Activated CD4-positive, alpha-beta memory T cell treated with anti-CD3 and anti-CD28 coated beads, Interleukin-2, amount 10 ng/mL, durations not matched to agents 7 days and 5 days (primary cell): ENCODE measurements at regions of chr22 and their contacts with region 1.

Region 1: GRCh38 chr22:45296628-45297297 is 12.0 kb downstream of the UPK3A start:
- DNase-seq: peak; percentile 56
- H3K4me3 Mint-ChIP-seq: peak overlapping the region; percentile 28
- H3K27ac Mint-ChIP-seq: peak overlapping the region; percentile 72
- H3K4me1 Mint-ChIP-seq: peaks cover 16% of the 10 kb centered on the region
- H3K27me3 Mint-ChIP-seq: no peaks in the 10 kb centered on the region

Region 2: GRCh38 chr22:45309472-45310227 is 12.9 kb after region 1 on chr22 and contains the start of gene FAM118A:
- CTCF ChIA-PET with region 1: no interaction called
- POLR2A ChIA-PET with region 1: interaction called, 17 read pairs
- DNase-seq: peak; percentile 97
- H3K4me3 Mint-ChIP-seq: peak within 1 kb of the TSS; percentile 81
- H3K27ac Mint-ChIP-seq: peak within 1 kb of the TSS; percentile 87
- H3K4me1 Mint-ChIP-seq: peaks cover 43% of the 10 kb centered on the region
- H3K27me3 Mint-ChIP-seq: no peaks in the 10 kb centered on the region
- total RNA-seq, gene FAM118A: 73.9 to 74.7 TPM